Natural killer cell (primary cell): ENCODE measurements at regions of chr2 and their contacts with region 1.

Region 1: GRCh38 chr2:102179788-102180686 is 6.8 kb upstream of the IL1RL2 start:
- DNase-seq: no peak
- ATAC-seq: no peak
- H3K4me3 ChIP-seq: no peak overlapping the region
- H3K4me3 Mint-ChIP-seq: no peak overlapping the region
- H3K27ac ChIP-seq: no peak overlapping the region
- H3K27ac Mint-ChIP-seq: no peak overlapping the region
- H3K4me1 ChIP-seq: no peaks in the 10 kb centered on the region
- H3K4me1 Mint-ChIP-seq: no peaks in the 10 kb centered on the region
- H3K27me3 ChIP-seq: peaks cover 4% of the 10 kb centered on the region
- H3K27me3 Mint-ChIP-seq: peaks cover 25 to 40% of the 10 kb centered on the region in 2 donors
- CTCF ChIP-seq: no peak

Region 2: GRCh38 chr2:102013206-102014040 is 166.6 kb before region 1 on chr2:
- intact Hi-C with region 1: loop called (anchors 1 kb)
- DNase-seq: no peak
- ATAC-seq: no peak
- H3K4me3 ChIP-seq: no peak overlapping the region
- H3K4me3 Mint-ChIP-seq: no peak overlapping the region
- H3K27ac ChIP-seq: no peak overlapping the region
- H3K27ac Mint-ChIP-seq: no peak overlapping the region
- H3K4me1 ChIP-seq: no peaks in the 10 kb centered on the region
- H3K4me1 Mint-ChIP-seq: no peaks in the 10 kb centered on the region
- H3K27me3 ChIP-seq: no peaks in the 10 kb centered on the region
- H3K27me3 Mint-ChIP-seq: peaks cover 34 to 52% of the 10 kb centered on the region in 2 donors
- CTCF ChIP-seq: no peak